PC-9 (cell line): ENCODE measurements at regions of chr17 and their contacts with region 1.

Region 1: GRCh38 chr17:10130263-10130662 is 68.1 kb downstream of the GAS7 start:
- DNase-seq: no peak
- H3K4me3 ChIP-seq: no peak overlapping the region
- H3K27ac ChIP-seq: no peak overlapping the region
- H3K4me1 ChIP-seq: no peaks in the 10 kb centered on the region
- H3K27me3 ChIP-seq: peaks cover 20% of the 10 kb centered on the region; the same call in 1 of the 2 replicates
- CTCF ChIP-seq: no peak

Region 2: GRCh38 chr17:9994761-9995160 is 135.5 kb before region 1 on chr17:
- CTCF ChIA-PET with region 1: no interaction called
- POLR2A ChIA-PET with region 1: interaction called, 10 read pairs
- intact Hi-C with region 1: no loop called
- DNase-seq: no peak
- H3K4me3 ChIP-seq: no peak overlapping the region
- H3K27ac ChIP-seq: no peak overlapping the region
- H3K4me1 ChIP-seq: no peaks in the 10 kb centered on the region
- H3K27me3 ChIP-seq: peaks cover 40% of the 10 kb centered on the region
- CTCF ChIP-seq: no peak

Region 3: DNA sequence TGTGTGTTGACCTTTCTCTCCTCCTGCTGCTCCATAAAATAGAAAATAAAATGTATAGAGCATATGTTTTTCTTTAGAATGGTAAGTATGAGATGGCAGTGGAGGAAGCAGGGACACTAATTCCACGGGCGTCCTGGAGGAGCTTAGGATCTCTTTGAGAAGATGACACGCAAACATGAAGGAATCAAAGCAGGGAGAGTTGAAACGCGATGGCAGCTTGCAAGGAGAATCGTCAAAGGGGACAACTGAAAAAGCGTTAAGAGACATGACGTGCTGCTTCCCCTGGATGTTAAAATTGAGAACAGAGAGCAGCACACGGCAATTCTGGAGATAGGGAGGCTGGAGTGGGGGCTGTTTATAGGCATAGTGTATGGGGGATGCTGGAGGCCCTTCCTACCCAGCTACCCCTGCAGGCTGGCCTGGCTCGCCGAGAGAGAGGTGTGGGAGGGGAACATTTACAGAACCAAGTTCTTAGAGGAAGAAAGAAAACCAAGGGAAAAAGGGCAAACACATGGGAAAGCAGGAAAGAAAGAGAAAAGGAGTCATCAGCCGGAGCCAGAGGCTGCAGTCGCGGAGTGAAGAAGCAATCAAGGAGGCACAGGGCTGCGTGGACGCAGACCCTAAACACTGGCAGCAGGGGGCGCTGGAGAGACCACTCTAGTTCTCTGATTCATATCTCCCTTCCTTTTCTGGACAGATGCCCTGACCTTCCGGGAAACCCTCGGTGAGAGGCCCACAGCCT is 186.7 kb after region 1 on chr17:
- CTCF ChIA-PET with region 1: no interaction called
- POLR2A ChIA-PET with region 1: no interaction called
- intact Hi-C with region 1: no loop called
- DNase-seq: no peak
- H3K4me3 ChIP-seq: no peak overlapping the region
- H3K27ac ChIP-seq: no peak overlapping the region
- H3K4me1 ChIP-seq: no peaks in the 10 kb centered on the region
- H3K27me3 ChIP-seq: peaks cover 5% of the 10 kb centered on the region; the same call in 1 of the 2 replicates
- CTCF ChIP-seq: peak; percentile 41